ENCODE measurements at regions of chr4 and their contacts with region 1.

Region 1: GRCh38 chr4:173257732-173258717 is 76.1 kb downstream of the HMGB2 start:
- DNase-seq: peak; percentile 77
- ATAC-seq: peak; percentile 94
- H3K4me3 Mint-ChIP-seq: no peak overlapping the region
- H3K27ac Mint-ChIP-seq: no peak overlapping the region
- H3K4me1 Mint-ChIP-seq: peaks cover 7% of the 10 kb centered on the region
- H3K27me3 Mint-ChIP-seq: no peaks in the 10 kb centered on the region
- CTCF ChIP-seq: peak; percentile 73

Region 2: DNA sequence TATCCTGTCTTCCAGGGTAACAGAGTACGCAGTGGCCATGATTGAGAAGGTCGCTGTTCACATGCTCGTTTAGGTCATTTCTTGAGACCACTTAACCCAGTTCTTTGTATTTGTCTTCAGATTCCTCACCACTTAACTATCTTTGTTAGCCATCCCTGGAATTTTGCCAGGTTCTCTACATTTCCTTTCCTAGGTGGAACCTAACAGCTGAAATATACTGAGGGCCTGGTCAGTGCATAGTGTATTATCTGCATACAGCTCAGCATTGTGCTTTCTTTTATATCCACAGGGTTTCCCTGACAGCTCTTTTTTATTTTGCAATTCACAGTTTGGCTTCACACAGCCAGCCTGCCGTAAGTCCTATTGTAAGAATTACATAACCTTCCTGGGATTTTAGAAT is 238.3 kb before region 1 on chr4:
- CTCF ChIA-PET with region 1: interaction called, 39 read pairs
- POLR2A ChIA-PET with region 1: no interaction called
- intact Hi-C with region 1: loop called (anchors 2 kb)
- DNase-seq: no peak
- ATAC-seq: no peak
- H3K4me3 Mint-ChIP-seq: no peak overlapping the region
- H3K27ac Mint-ChIP-seq: no peak overlapping the region
- H3K4me1 Mint-ChIP-seq: no peaks in the 10 kb centered on the region
- H3K27me3 Mint-ChIP-seq: no peaks in the 10 kb centered on the region
- CTCF ChIP-seq: no peak

Region 3: DNA sequence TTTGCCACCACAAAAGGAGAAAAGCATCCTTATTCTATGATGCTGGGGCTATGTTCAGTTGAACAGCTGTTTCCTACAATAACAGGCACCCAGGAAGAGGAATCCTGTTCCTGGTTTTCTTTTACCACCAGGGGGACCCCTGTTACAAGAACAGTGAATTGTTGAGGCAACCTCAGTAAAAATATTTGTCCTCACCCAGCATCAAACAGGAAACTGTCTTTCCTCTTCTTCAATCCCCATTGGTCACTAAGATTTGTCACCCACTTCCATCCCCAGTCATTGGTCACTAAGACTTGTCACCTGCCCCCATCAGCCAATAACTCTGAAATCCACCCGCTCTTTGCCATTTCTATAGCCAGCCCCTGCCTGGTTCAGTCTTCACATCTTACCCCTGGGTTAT is 232.9 kb before region 1 on chr4:
- CTCF ChIA-PET with region 1: interaction called, 39 read pairs
- POLR2A ChIA-PET with region 1: no interaction called
- intact Hi-C with region 1: loop called (anchors 2 kb)
- DNase-seq: peak; percentile 40
- ATAC-seq: peak; percentile 80
- H3K4me3 Mint-ChIP-seq: no peak overlapping the region
- H3K27ac Mint-ChIP-seq: no peak overlapping the region
- H3K4me1 Mint-ChIP-seq: no peaks in the 10 kb centered on the region
- H3K27me3 Mint-ChIP-seq: no peaks in the 10 kb centered on the region
- CTCF ChIP-seq: peak; percentile 59

Measured in activated CD8-positive, alpha-beta T cell treated with anti-CD3 and anti-CD28 coated beads for 36 hours (primary cell).